ENCODE measurements at regions of chr6 and their contacts with region 1.

Region 1: GRCh38 chr6:108565893-108566292 is 5.2 kb downstream of the FOXO3 start:
- DNase-seq: no peak
- ATAC-seq: peak; percentile 45
- H3K4me3 Mint-ChIP-seq: peak overlapping the region; percentile 70
- H3K27ac Mint-ChIP-seq: peak overlapping the region; percentile 86
- H3K4me1 Mint-ChIP-seq: peaks cover 65% of the 10 kb centered on the region
- H3K27me3 Mint-ChIP-seq: no peaks in the 10 kb centered on the region
- CTCF ChIP-seq: no peak

Region 2: GRCh38 chr6:108348655-108349349 is 217.1 kb before region 1 on chr6:
- CTCF ChIA-PET with region 1: no interaction called
- POLR2A ChIA-PET with region 1: no interaction called
- intact Hi-C with region 1: no loop called
- DNase-seq: no peak
- ATAC-seq: peak; percentile 94
- H3K4me3 Mint-ChIP-seq: peak overlapping the region; percentile 75
- H3K27ac Mint-ChIP-seq: peak overlapping the region; percentile 99
- H3K4me1 Mint-ChIP-seq: peaks cover 34% of the 10 kb centered on the region
- H3K27me3 Mint-ChIP-seq: no peaks in the 10 kb centered on the region
- CTCF ChIP-seq: no peak

Region 3: DNA sequence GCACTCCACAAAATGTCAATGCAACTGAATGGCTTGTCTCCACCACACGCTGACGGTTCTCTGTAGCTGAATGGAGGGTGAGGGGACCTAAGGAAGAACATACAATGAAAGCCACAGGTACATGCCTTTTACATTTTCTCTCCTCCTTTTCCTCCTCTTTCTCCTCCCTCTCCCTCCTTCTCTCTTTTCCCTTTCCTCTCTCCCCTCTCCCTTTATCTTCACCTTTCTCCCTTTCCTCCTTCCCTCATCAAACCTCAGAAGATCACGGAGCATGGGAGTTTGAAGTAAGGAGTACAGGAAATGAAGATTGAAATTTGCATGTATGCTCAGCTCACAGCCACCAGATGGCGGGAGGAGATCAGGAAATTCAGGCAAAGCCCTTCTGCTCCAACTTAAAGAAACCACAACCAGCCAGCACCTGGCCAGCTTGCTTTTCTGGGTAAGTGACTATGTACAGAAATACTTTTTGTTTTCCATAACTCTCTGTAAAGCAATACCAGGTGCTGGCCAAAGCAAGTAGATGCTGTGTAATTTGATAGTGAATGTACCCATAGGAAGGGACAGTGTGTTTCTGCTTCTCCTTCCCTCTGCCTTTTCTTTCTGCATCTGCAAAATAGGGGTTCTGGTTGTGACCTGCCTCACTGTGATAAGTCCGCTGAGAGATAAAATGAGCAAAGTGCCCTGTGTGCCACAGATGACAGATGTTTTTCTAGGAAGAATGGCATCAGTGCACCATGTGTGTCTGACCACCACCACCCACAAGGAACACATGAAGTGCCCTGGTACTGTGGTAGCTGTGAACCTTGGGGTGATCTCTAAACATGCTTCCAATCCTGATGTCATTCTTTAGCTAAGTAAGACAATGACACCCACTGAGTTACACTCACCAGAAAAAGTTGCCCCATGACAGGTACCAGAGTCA is 23.8 kb before region 1 on chr6:
- CTCF ChIA-PET with region 1: interaction called, 4 read pairs
- POLR2A ChIA-PET with region 1: no interaction called
- intact Hi-C with region 1: loop called (anchors 1 kb)
- DNase-seq: peak; percentile 34
- ATAC-seq: peak; percentile 84
- H3K4me3 Mint-ChIP-seq: peak overlapping the region; percentile 41
- H3K27ac Mint-ChIP-seq: no peak overlapping the region
- H3K4me1 Mint-ChIP-seq: peaks cover 15% of the 10 kb centered on the region
- H3K27me3 Mint-ChIP-seq: peaks cover 7% of the 10 kb centered on the region
- CTCF ChIP-seq: peak; percentile 39

Region 4: GRCh38 chr6:108589287-108589791 is 23.4 kb after region 1 on chr6:
- CTCF ChIA-PET with region 1: interaction called, 4 read pairs
- POLR2A ChIA-PET with region 1: interaction called, 13 read pairs
- intact Hi-C with region 1: no loop called
- DNase-seq: no peak
- ATAC-seq: peak; percentile 64
- H3K4me3 Mint-ChIP-seq: peak overlapping the region; percentile 32
- H3K27ac Mint-ChIP-seq: peak overlapping the region; percentile 55
- H3K4me1 Mint-ChIP-seq: peaks cover 79% of the 10 kb centered on the region
- H3K27me3 Mint-ChIP-seq: no peaks in the 10 kb centered on the region
- CTCF ChIP-seq: no peak

Region 5: DNA sequence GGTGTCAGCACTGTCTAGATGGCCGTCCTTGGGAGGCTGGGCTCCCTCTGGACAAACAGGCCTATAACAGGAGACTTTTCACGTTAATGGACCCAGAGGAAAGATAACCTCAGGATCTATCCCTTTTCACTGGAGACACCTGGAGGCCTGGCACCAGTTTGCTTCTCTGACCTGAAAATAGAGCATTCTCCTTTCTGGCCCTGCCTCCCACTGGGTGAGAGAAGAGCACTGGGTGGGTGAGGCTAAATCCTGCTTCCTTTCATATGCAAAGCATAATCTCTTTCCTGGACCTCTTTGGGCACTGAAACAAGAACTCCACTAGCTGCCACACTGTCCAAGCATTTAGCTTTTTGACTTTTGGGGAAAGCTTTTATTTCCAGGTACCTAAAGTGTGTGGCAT is 73.1 kb after region 1 on chr6:
- CTCF ChIA-PET with region 1: no interaction called
- POLR2A ChIA-PET with region 1: no interaction called
- intact Hi-C with region 1: no loop called
- DNase-seq: no peak
- ATAC-seq: no peak
- H3K4me3 Mint-ChIP-seq: no peak overlapping the region
- H3K27ac Mint-ChIP-seq: no peak overlapping the region
- H3K4me1 Mint-ChIP-seq: peaks cover 25% of the 10 kb centered on the region
- H3K27me3 Mint-ChIP-seq: no peaks in the 10 kb centered on the region
- CTCF ChIP-seq: no peak

Region 6: DNA sequence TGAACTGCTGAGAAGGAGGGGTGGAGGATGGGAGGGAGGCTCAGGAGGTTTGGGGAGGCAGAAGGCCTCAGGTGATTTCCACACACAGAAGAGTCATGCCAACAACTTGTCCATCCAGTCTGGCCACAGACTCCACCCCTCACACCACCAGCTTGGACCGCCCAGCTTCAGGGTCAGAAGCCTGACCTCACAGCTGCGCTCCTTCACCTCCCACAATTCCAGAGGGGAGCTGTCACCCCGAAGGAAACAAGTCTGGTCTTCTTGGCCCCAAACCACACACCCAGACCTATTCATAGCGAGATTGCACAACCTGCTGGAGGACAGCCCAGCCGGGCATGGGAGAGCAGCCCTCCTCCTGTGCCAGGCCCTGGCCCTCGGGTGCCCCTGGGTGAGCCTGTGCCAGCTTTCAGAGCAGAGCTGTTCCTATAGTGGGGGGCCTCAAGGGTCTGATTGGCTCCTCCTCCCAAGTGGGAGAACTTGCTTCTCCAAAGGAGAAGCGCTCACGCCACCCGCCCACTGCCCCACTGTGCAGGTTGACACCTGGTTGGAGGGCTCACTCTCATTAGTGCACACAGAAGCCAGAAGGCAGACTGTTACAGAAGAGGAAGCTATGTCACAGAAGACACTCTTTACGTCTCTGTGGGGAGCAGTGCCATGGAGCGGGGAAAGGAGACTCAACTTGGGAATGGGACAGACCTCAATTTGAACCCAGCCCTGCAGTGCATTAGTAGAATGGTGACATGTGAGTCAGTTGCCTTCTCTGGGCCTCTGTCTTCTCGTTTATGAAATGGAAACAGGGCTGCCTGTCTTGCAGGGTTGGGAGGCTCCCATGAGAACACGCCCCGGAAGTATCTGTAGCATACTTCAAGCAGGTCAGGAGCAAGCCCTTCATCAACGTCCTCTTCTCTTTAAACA is 123.6 kb after region 1 on chr6:
- CTCF ChIA-PET with region 1: no interaction called
- POLR2A ChIA-PET with region 1: no interaction called
- intact Hi-C with region 1: loop called (anchors 5 kb)
- DNase-seq: no peak
- ATAC-seq: no peak
- H3K4me3 Mint-ChIP-seq: no peak overlapping the region
- H3K27ac Mint-ChIP-seq: no peak overlapping the region
- H3K4me1 Mint-ChIP-seq: no peaks in the 10 kb centered on the region
- H3K27me3 Mint-ChIP-seq: no peaks in the 10 kb centered on the region
- CTCF ChIP-seq: no peak

Region 7: GRCh38 chr6:108835218-108835850 is 269.4 kb after region 1 on chr6:
- CTCF ChIA-PET with region 1: interaction called, 4 read pairs
- POLR2A ChIA-PET with region 1: no interaction called
- intact Hi-C with region 1: loop called (anchors 1 kb)
- DNase-seq: peak; percentile 72
- ATAC-seq: peak; percentile 95
- H3K4me3 Mint-ChIP-seq: no peak overlapping the region
- H3K27ac Mint-ChIP-seq: no peak overlapping the region
- H3K4me1 Mint-ChIP-seq: peaks cover 25% of the 10 kb centered on the region
- H3K27me3 Mint-ChIP-seq: peaks cover 8% of the 10 kb centered on the region
- CTCF ChIP-seq: no peak

Region 8: DNA sequence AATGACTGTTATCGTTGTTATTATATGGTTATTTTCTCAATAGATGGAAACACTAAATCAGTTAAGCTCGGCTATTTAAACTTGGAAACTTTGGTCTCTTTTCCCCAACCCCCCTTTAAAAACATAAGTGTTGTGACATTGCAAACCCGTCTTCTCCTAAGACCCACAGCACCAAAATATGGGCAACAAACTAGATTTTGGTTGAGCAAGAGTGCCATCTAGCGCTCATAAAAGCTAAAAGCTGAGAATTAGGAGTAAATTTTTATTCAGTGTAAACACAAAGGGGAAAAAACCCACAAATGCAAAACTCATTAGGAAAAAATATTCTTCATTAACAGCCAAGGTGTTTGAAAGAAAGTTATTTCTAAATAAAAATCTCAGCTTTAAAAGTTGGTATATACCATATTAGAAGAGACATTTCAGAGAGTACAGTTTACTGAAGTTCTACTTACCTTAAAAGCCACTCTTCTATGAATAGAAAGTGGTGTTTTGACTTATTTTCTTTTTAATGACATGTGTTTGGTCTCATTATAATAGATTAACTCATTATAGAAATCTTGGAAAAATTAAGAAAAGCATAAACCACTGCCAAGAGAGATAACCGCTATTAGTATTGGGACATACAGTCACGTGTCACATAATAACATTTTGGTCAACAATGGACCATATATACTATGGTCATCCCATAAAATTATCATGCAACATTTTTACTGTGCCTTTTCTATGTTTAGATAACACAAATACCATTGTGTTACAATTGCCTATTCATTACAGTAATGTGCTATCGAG is 507.6 kb after region 1 on chr6:
- CTCF ChIA-PET with region 1: interaction called, 11 read pairs
- POLR2A ChIA-PET with region 1: no interaction called
- intact Hi-C with region 1: no loop called
- DNase-seq: no peak
- ATAC-seq: no peak
- H3K4me3 Mint-ChIP-seq: no peak overlapping the region
- H3K27ac Mint-ChIP-seq: no peak overlapping the region
- H3K4me1 Mint-ChIP-seq: peaks cover 5% of the 10 kb centered on the region
- H3K27me3 Mint-ChIP-seq: no peaks in the 10 kb centered on the region
- CTCF ChIP-seq: peak; percentile 89

Measured in activated B cell treated with CpG ODN at 0.5 μM for 24 hours (primary cell).